ENCODE measurements at regions of chr5 and their contacts with region 1.

Region 1: GRCh38 chr5:131263648-131264450 is at the start of gene CDC42SE2:
- DNase-seq: peak; percentile 92 to 94 (median 94)
- ATAC-seq: peak; percentile 93
- H3K4me3 ChIP-seq: peak within 1 kb of the TSS; percentile 94
- H3K27ac ChIP-seq: peak within 1 kb of the TSS; percentile 92
- H3K4me1 ChIP-seq: peaks cover 0 to 4% of the 10 kb centered on the region in 2 experiments; a peak in 3 of 5 replicates
- H3K27me3 ChIP-seq: no peaks in the 10 kb centered on the region
- CTCF ChIP-seq: no peak
- EP300 ChIP-seq: no peak
- POLR2A ChIP-seq: peak; percentile 87
- RAD21 ChIP-seq: peak in 1 of 2 experiments; percentile 19; a peak in 2 of 4 replicates
- polyA plus RNA-seq, gene CDC42SE2: 25.9 to 27.9 TPM

Region 2: DNA sequence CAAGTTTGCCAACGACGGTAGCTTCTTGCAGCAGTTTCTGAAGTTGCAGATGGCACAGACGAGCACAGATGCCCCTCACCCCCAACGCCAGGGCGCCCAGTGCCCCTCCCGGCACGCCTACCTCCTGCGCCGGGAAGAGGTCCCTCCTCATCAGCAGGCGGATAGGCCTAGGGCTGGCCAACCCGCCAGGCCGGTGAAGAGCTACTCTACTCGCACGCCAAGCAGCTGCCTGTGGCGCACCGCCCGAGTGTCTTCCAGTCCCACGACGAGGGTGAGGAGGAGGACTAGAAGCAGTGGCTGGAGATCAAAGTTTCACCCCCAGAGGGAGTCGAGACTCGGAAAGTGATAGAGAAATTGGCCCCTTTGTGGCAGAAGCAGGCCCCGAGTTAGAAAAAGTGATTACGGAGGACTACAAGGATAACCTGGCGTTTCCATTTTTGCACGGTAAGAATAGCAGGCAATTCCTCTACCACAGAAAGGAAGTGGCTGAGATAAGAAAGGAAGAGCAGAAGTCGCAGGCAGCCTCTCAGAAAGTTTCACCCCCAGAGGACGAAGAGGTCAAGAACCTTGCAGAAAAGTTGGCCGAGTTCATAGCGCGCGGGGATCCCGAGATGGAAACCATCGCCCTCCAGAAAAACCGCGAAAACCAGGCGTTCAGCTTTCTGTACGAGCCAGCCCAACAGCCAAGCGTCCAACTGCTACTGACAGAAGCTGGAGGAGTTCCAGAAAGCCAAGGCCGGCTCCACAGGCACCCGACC is 269.2 kb before region 1 on chr5:
- CTCF ChIA-PET with region 1: no interaction called
- POLR2A ChIA-PET with region 1: no interaction called
- in situ Hi-C with region 1: no loop called
- intact Hi-C with region 1: no loop called
- DNase-seq: peak in 1 of 4 experiments; percentile 4
- ATAC-seq: peak; percentile 55
- H3K4me3 ChIP-seq: no peak overlapping the region
- H3K27ac ChIP-seq: no peak overlapping the region
- H3K4me1 ChIP-seq: peaks cover 0 to 15% of the 10 kb centered on the region in 2 experiments; a peak in 2 of 5 replicates
- H3K27me3 ChIP-seq: peaks cover 19 to 31% of the 10 kb centered on the region in 2 experiments; a peak in 4 of 5 replicates
- CTCF ChIP-seq: no peak
- EP300 ChIP-seq: no peak
- POLR2A ChIP-seq: no peak
- RAD21 ChIP-seq: no peak

Region 3: GRCh38 chr5:131170540-131171275 is 93.1 kb before region 1 on chr5 and contains the start of gene LYRM7:
- CTCF ChIA-PET with region 1: no interaction called
- POLR2A ChIA-PET with region 1: interaction called, 3 read pairs
- in situ Hi-C with region 1: no loop called
- intact Hi-C with region 1: loop called (anchors 2 kb)
- DNase-seq: peak; percentile 80 to 99 (median 88)
- ATAC-seq: peak; percentile 95
- H3K4me3 ChIP-seq: peak within 1 kb of the TSS; percentile 52
- H3K27ac ChIP-seq: peak within 1 kb of the TSS; percentile 79
- H3K4me1 ChIP-seq: peaks cover 11 to 28% of the 10 kb centered on the region in 2 experiments
- H3K27me3 ChIP-seq: no peaks in the 10 kb centered on the region
- CTCF ChIP-seq: 0 out of 6 replicates have a peak, but pooled peaks of 1 of the 3 experiments have one; percentile 1
- EP300 ChIP-seq: peak; percentile 41; the same call in 1 of the 2 replicates
- POLR2A ChIP-seq: peak; percentile 87
- RAD21 ChIP-seq: no peak
- polyA plus RNA-seq, gene LYRM7: 53.6 to 70.1 TPM

Region 4: DNA sequence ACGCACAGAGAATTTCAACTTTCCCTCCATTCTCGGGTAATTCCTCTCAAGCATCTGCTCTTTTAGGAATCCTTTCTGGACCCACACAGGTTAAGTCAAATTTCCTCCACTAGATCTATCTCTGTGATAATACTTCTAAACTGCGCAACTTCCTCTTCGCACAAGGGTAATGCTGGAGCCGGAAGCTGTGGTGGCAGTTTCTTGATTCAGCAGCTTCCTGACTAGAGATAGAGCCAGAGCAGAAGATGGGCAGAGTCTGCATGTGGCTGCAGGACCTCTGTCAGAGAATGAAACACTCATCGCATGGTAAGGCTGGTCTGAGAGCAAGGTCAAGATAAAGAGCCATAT is 11.1 kb before region 1 on chr5:
- CTCF ChIA-PET with region 1: no interaction called
- POLR2A ChIA-PET with region 1: interaction called, 20 read pairs
- in situ Hi-C with region 1: no loop called
- intact Hi-C with region 1: no loop called
- DNase-seq: peak in 2 of 4 experiments; percentile 12 to 52
- ATAC-seq: peak; percentile 72
- H3K4me3 ChIP-seq: no peak overlapping the region
- H3K27ac ChIP-seq: no peak overlapping the region
- H3K4me1 ChIP-seq: peaks cover 4 to 15% of the 10 kb centered on the region in 2 experiments
- H3K27me3 ChIP-seq: no peaks in the 10 kb centered on the region
- CTCF ChIP-seq: no peak
- EP300 ChIP-seq: 0 out of 2 replicates have a peak, but pooled peaks have one; percentile 19
- POLR2A ChIP-seq: no peak
- RAD21 ChIP-seq: no peak; a peak in 1 of 4 replicates

Region 5: GRCh38 chr5:131514316-131515283 is 250.8 kb after region 1 on chr5:
- CTCF ChIA-PET with region 1: no interaction called
- POLR2A ChIA-PET with region 1: no interaction called
- in situ Hi-C with region 1: no loop called
- intact Hi-C with region 1: no loop called
- DNase-seq: no peak
- ATAC-seq: peak; percentile 70
- H3K4me3 ChIP-seq: no peak overlapping the region
- H3K27ac ChIP-seq: peak overlapping the region; percentile 21; the same call in 1 of the 3 replicates
- H3K4me1 ChIP-seq: peaks cover 0 to 7% of the 10 kb centered on the region in 2 experiments; a peak in 2 of 5 replicates
- H3K27me3 ChIP-seq: no peaks in the 10 kb centered on the region
- CTCF ChIP-seq: peak in 1 of 3 experiments; percentile 24; a peak in 1 of 6 replicates
- EP300 ChIP-seq: no peak
- POLR2A ChIP-seq: no peak
- RAD21 ChIP-seq: peak; percentile 25 to 31; a peak in 1 of 4 replicates

Region 6: GRCh38 chr5:131570771-131571170 is 306.9 kb after region 1 on chr5:
- CTCF ChIA-PET with region 1: no interaction called
- POLR2A ChIA-PET with region 1: no interaction called
- in situ Hi-C with region 1: no loop called
- intact Hi-C with region 1: no loop called
- DNase-seq: no peak
- ATAC-seq: no peak
- H3K4me3 ChIP-seq: no peak overlapping the region
- H3K27ac ChIP-seq: no peak overlapping the region
- H3K4me1 ChIP-seq: peaks cover 0 to 3% of the 10 kb centered on the region in 2 experiments; a peak in 1 of 5 replicates
- H3K27me3 ChIP-seq: no peaks in the 10 kb centered on the region
- CTCF ChIP-seq: no peak
- EP300 ChIP-seq: no peak
- POLR2A ChIP-seq: no peak
- RAD21 ChIP-seq: no peak